Cardiac septum (tissue), 1 donor: ENCODE measurements at regions of chr7 and their contacts with region 1.

Region 1: GRCh38 chr7:142782922-142783900 is 12.4 kb downstream of the PRSS2 start:
- DNase-seq: peak; percentile 86

Region 2: GRCh38 chr7:142632291-142633134 is 150.7 kb before region 1 on chr7:
- intact Hi-C with region 1: loop called (anchors 1 kb)
- DNase-seq: no peak

Region 3: DNA sequence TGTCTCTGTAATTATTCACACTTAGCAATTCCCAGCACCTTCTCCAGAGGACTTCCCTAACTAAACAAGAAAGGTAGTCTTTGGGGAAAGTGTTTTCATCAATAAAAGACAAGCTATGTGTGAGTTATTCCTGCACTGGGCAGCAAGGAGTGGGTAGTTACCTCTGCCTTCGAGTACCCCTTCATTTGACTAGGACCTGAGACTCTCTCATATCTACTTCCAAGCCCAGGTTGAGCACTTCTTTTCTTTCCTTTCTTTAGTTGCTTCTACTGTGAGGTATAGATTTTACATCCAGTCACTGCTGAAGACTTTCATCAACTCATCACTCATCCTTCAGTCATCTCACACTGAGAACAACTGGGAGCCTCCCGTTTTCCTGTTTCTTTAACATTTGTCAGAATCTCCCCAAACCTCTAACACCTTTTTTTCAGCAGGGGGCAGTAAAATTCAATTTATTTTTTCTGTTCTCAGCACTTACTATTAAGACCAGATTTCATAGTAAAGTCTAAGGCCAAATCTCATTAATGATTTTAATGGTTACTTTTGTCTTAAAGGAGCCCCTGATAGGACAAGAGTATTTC is 114.0 kb before region 1 on chr7:
- intact Hi-C with region 1: loop called (anchors 2 kb)
- DNase-seq: no peak

Region 4: GRCh38 chr7:142689439-142690120 is 93.6 kb before region 1 on chr7:
- intact Hi-C with region 1: loop called (anchors 5 kb)
- DNase-seq: no peak

Region 5: GRCh38 chr7:142711746-142712619 is 71.2 kb before region 1 on chr7:
- intact Hi-C with region 1: loop called (anchors 1 kb)
- DNase-seq: no peak